ENCODE measurements at regions of chr19 and their contacts with region 1.

Region 1: DNA sequence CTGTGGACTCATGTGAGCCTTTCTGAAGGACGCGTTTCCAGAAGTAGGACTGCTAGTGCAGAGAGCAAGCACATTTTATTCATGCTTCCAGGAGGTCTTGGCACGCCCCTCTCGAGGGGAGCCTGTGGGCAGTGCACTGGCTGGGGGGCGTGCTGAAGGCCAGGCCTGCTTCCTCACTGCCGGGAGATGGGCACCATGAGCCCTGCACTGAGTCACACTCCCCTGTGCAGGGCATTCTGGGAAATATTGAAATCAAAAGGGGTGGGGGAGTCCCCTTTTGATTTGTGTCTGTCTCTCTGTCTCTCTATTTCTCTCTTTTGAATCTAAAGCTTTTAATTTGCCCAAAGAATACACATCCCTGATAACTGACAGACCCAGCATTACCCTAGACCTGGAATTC is 34.0 kb downstream of the DPF1 start:
- DNase-seq: no peak
- H3K4me3 ChIP-seq: no peak overlapping the region
- H3K27ac ChIP-seq: no peak overlapping the region
- H3K4me1 ChIP-seq: no peaks in the 10 kb centered on the region; a peak in 1 of 7 replicates
- H3K27me3 ChIP-seq: no peaks in the 10 kb centered on the region
- CTCF ChIP-seq: no peak
- EP300 ChIP-seq: no peak
- POLR2A ChIP-seq: no peak
- RAD21 ChIP-seq: no peak

Region 2: GRCh38 chr19:38134540-38135149 is 55.4 kb before region 1 on chr19:
- CTCF ChIA-PET with region 1: interaction called, 11 read pairs
- POLR2A ChIA-PET with region 1: no interaction called
- DNase-seq: peak in 1 of 2 experiments; percentile 69
- H3K4me3 ChIP-seq: no peak overlapping the region
- H3K27ac ChIP-seq: no peak overlapping the region
- H3K4me1 ChIP-seq: peaks cover 0 to 7% (median 0%) of the 10 kb centered on the region in 4 experiments; a peak in 3 of 7 replicates
- H3K27me3 ChIP-seq: no peaks in the 10 kb centered on the region
- CTCF ChIP-seq: peak; percentile 56 to 70 (median 70)
- EP300 ChIP-seq: no peak
- POLR2A ChIP-seq: no peak
- RAD21 ChIP-seq: peak; percentile 38 to 40

Region 3: GRCh38 chr19:38155453-38155852 is 34.6 kb before region 1 on chr19:
- CTCF ChIA-PET with region 1: no interaction called
- POLR2A ChIA-PET with region 1: no interaction called
- DNase-seq: no peak
- H3K4me3 ChIP-seq: no peak overlapping the region
- H3K27ac ChIP-seq: no peak overlapping the region
- H3K4me1 ChIP-seq: no peaks in the 10 kb centered on the region
- H3K27me3 ChIP-seq: no peaks in the 10 kb centered on the region
- CTCF ChIP-seq: no peak
- EP300 ChIP-seq: no peak
- POLR2A ChIP-seq: no peak
- RAD21 ChIP-seq: no peak

Region 4: DNA sequence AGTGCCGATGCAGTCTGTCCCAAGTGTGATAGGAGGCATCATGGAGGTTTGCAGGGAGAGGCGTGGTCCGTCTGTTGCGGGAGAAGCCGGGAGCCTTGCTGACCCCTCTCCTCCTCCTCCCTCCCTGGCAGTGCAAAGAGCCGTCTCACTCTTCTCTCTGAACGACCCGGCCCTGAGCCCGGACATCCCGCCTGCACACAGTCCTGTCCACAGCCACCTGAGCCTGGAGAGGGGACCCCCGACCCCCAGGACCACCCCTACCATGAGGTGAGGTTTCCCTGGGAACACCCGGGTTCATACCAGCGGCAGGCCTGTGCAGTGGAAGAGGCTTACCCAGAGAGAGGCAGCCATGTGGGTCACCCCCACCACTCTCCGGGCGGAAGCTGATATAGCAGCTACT is 11.7 kb after region 1 on chr19:
- CTCF ChIA-PET with region 1: no interaction called
- POLR2A ChIA-PET with region 1: no interaction called
- DNase-seq: no peak
- H3K4me3 ChIP-seq: no peak overlapping the region
- H3K27ac ChIP-seq: no peak overlapping the region
- H3K4me1 ChIP-seq: no peaks in the 10 kb centered on the region
- H3K27me3 ChIP-seq: no peaks in the 10 kb centered on the region
- CTCF ChIP-seq: no peak
- EP300 ChIP-seq: no peak
- POLR2A ChIP-seq: no peak
- RAD21 ChIP-seq: no peak